Tibial artery (tissue), 4 donors: ENCODE measurements at regions of chrX and their contacts with region 1.

Region 1: DNA sequence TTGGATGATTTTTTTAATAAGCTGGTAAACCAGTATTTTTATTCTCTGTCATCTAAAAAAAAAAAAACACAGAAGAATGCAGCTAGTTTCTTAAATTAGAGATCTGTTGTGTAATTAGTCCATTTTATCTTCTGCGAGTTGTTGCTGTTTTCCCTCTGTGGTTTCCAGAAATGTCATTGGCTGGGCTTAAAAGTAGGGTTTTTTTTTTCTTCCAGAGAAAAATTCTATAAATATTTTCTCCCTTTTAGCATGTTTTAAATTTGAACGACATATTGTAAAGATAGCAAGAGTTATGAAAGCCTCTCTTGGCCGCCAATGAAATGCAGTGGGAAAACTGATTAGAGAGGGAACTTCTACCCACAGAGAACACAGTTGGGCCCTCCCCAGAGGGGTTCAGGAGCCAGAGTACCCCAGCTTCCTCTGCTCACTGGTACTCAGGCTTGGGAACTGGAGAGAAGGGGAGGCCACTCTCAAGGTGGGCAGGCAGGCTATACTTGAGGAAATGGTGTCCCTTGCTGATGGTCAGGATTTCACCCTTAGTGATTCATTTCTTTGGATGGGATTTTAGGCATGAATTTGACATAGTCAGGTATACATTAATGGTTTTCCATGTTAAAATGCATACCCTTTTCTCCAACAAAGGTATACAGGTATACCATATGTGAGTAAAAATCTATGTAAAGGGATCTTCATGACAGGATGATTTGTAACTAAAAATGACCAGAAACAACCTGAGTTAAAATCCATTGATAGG is 166.1 kb downstream of the BCOR start:
- DNase-seq: no peak
- H3K4me3 ChIP-seq: no peak overlapping the region
- H3K27ac ChIP-seq: peak overlapping the region in 1 of 2 donors; percentile 35
- H3K4me1 ChIP-seq: peaks cover 0 to 14% (median 4%) of the 10 kb centered on the region in 4 donors
- H3K27me3 ChIP-seq: no peaks in the 10 kb centered on the region
- CTCF ChIP-seq: no peak

Region 2: DNA sequence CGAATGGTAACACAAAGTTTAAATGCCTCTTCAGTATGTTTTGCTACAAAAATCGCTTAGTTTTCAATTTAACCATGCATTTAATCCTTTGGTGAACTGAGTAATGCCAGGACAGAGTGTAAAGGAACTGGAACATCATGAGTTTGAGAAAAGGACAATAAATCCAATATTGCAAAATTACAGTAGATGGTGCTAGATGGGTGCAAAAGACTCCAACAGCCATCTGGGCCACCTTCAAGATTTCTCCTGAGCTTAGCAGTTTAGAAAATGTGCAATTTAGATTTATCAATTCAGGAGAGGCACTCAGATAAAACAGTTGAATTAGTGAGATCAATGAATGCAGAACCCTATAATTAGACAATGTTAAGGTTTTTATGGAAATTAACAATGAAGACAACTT is 1163.6 kb before region 1 on chrX:
- intact Hi-C with region 1: loop called (anchors 5 kb)
- DNase-seq: no peak
- H3K4me3 ChIP-seq: no peak overlapping the region
- H3K27ac ChIP-seq: no peak overlapping the region
- H3K4me1 ChIP-seq: no peaks in the 10 kb centered on the region
- H3K27me3 ChIP-seq: no peaks in the 10 kb centered on the region
- CTCF ChIP-seq: peak; percentile 34 to 46

Region 3: GRCh38 chrX:39361736-39362135 is 570.0 kb before region 1 on chrX:
- intact Hi-C with region 1: no loop called
- DNase-seq: no peak
- H3K4me3 ChIP-seq: no peak overlapping the region
- H3K27ac ChIP-seq: no peak overlapping the region
- H3K4me1 ChIP-seq: no peaks in the 10 kb centered on the region
- H3K27me3 ChIP-seq: no peaks in the 10 kb centered on the region
- CTCF ChIP-seq: no peak

Region 4: GRCh38 chrX:40153335-40154249 is 221.9 kb after region 1 on chrX:
- intact Hi-C with region 1: no loop called
- DNase-seq: peak in 1 of 2 donors; percentile 73
- H3K4me3 ChIP-seq: peak overlapping the region; percentile 53 to 59
- H3K27ac ChIP-seq: peak overlapping the region; percentile 67 to 73
- H3K4me1 ChIP-seq: peaks cover 0 to 43% (median 18%) of the 10 kb centered on the region in 4 donors
- H3K27me3 ChIP-seq: no peaks in the 10 kb centered on the region
- CTCF ChIP-seq: no peak